ENCODE measurements at regions of chr7 and their contacts with region 1.

Region 1: GRCh38 chr7:133134810-133135209 is 52.9 kb upstream of the CHCHD3 start:
- DNase-seq: no peak
- H3K4me3 ChIP-seq: no peak overlapping the region
- H3K27ac ChIP-seq: no peak overlapping the region
- H3K4me1 ChIP-seq: no peaks in the 10 kb centered on the region
- H3K27me3 ChIP-seq: no peaks in the 10 kb centered on the region
- CTCF ChIP-seq: no peak
- POLR2A ChIP-seq: no peak

Region 2: GRCh38 chr7:131726031-131726430 is 1408.8 kb before region 1 on chr7:
- intact Hi-C with region 1: loop called (anchors 5 kb)
- DNase-seq: no peak
- H3K4me3 ChIP-seq: no peak overlapping the region
- H3K27ac ChIP-seq: no peak overlapping the region
- H3K4me1 ChIP-seq: no peaks in the 10 kb centered on the region
- H3K27me3 ChIP-seq: no peaks in the 10 kb centered on the region
- CTCF ChIP-seq: no peak
- POLR2A ChIP-seq: no peak

Region 3: GRCh38 chr7:133118261-133118660 is 16.5 kb before region 1 on chr7:
- intact Hi-C with region 1: no loop called
- DNase-seq: no peak
- H3K4me3 ChIP-seq: no peak overlapping the region
- H3K27ac ChIP-seq: no peak overlapping the region
- H3K4me1 ChIP-seq: no peaks in the 10 kb centered on the region
- H3K27me3 ChIP-seq: no peaks in the 10 kb centered on the region
- CTCF ChIP-seq: no peak
- POLR2A ChIP-seq: no peak

Region 4: GRCh38 chr7:133412942-133413341 is 278.1 kb after region 1 on chr7:
- intact Hi-C with region 1: no loop called
- DNase-seq: no peak
- H3K4me3 ChIP-seq: no peak overlapping the region
- H3K27ac ChIP-seq: no peak overlapping the region
- H3K4me1 ChIP-seq: no peaks in the 10 kb centered on the region
- H3K27me3 ChIP-seq: no peaks in the 10 kb centered on the region
- CTCF ChIP-seq: no peak
- POLR2A ChIP-seq: no peak